H1 (cell line): ENCODE measurements at regions of chr20 and their contacts with region 1.

Region 1: GRCh38 chr20:2822073-2822472 is 5.9 kb downstream of the TMEM239 start:
- DNase-seq: peak in 1 of 2 experiments; percentile 39
- H3K4me3 ChIP-seq: no peak overlapping the region
- H3K27ac ChIP-seq: no peak overlapping the region
- H3K4me1 ChIP-seq: peaks cover 0 to 14% (median 9%) of the 10 kb centered on the region in 4 experiments; a peak in 6 of 7 replicates
- H3K27me3 ChIP-seq: peaks cover 20 to 39% (median 31%) of the 10 kb centered on the region in 4 experiments
- CTCF ChIP-seq: no peak
- EP300 ChIP-seq: no peak
- POLR2A ChIP-seq: no peak
- RAD21 ChIP-seq: no peak

Region 2: DNA sequence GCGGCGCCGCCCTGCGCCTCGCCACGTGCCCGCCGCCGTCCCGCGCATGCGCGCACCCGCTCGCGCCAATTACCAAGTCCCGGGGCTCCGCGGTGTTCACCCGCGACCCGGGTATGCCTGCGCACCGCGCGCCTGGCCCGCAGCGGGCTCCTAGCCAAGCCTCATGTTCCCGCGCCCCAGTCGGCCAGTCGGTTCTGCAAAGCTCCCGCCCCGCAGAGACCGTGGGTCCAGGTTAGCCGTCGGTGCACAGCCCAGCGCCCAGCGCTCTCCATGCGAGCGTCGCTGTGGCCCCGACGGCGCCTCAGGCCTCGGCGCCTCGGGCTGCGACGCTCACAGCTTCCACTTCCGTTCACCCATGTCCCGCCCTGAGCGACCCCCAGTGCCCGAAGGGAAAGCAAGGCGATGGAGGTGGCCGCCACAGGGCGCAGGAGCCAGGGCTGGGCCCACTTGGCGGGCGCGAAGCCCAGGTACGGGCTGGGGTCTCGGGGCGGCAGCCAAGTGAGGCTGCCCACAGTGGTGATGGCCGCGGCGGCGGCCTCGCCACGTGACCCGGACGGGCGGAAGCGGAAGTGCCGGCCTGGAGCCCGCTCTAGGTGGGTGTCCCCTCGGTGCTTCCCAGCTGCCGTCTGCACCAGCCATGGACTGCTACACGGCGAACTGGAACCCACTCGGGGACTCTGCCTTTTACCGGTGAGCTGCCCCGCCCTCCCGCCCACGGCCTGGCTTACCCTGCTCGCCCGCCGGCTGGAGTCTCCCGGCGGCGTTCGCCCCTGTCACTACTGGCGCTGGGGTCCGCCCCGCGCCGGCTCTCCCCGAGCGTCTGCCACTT is 18.3 kb after region 1 on chr20 and contains the starts of genes PCED1A and VPS16:
- CTCF ChIA-PET with region 1: no interaction called
- POLR2A ChIA-PET with region 1: interaction called, 10 read pairs
- DNase-seq: peak; percentile 49 to 93
- H3K4me3 ChIP-seq: peak within 1 kb of the TSS; percentile 64 to 93 (median 71)
- H3K27ac ChIP-seq: no peak within 1 kb of the TSS
- H3K4me1 ChIP-seq: no peaks in the 10 kb centered on the region; a peak in 1 of 7 replicates
- H3K27me3 ChIP-seq: peaks cover 5 to 20% (median 17%) of the 10 kb centered on the region in 4 experiments
- CTCF ChIP-seq: no peak
- EP300 ChIP-seq: no peak
- POLR2A ChIP-seq: peak in 1 of 2 experiments; percentile 59; a peak in 2 of 3 replicates
- RAD21 ChIP-seq: no peak
- total RNA-seq, gene PCED1A: 13.4 and 14.6 TPM in 2 replicates
- total RNA-seq, gene VPS16: 22.6 and 25.9 TPM in 2 replicates